Gastrocnemius medialis (tissue), 4 donors: ENCODE measurements at regions of chr2 and their contacts with region 1.

Region 1: GRCh38 chr2:164841719-164842623 is at the start of gene COBLL1:
- DNase-seq: peak; percentile 48 to 54
- ATAC-seq: peak; percentile 77 to 84
- H3K4me3 ChIP-seq: peak within 1 kb of the TSS; percentile 76 to 93 (median 84)
- H3K27ac ChIP-seq: peak within 1 kb of the TSS; percentile 76 to 92 (median 85)
- H3K4me1 ChIP-seq: peaks cover 8 to 12% of the 10 kb centered on the region in 2 donors
- H3K27me3 ChIP-seq: no peaks in the 10 kb centered on the region
- CTCF ChIP-seq: peak; percentile 51 to 86 (median 79)
- POLR2A ChIP-seq: no peak
- total RNA-seq, gene COBLL1: 1.9 to 9.6 (median 4.0) TPM

Region 2: GRCh38 chr2:164574925-164575324 is 267.0 kb before region 1 on chr2:
- in situ Hi-C with region 1: no loop called
- intact Hi-C with region 1: no loop called
- DNase-seq: no peak
- ATAC-seq: no peak
- H3K4me3 ChIP-seq: no peak overlapping the region
- H3K27ac ChIP-seq: no peak overlapping the region
- H3K4me1 ChIP-seq: no peaks in the 10 kb centered on the region
- H3K27me3 ChIP-seq: no peaks in the 10 kb centered on the region
- CTCF ChIP-seq: no peak
- POLR2A ChIP-seq: no peak

Region 3: DNA sequence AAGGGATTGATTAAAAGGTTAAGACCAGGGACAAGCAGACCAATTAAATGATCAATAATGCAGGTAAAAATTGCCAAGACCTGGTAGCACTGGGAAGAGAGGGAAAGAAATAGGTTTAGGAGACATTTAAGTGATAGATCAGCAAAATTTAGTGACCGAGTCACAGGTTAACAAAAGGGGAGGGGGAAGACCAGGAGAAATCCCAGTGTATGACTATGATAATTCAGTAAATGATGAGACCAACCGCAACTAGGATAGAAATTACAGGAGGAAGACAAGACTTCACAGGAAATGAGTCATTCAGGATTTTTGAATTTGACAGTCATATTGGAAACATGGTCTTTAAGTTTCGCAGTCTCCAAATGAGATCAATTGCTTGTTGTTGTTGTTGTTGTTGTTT is 63.2 kb before region 1 on chr2:
- in situ Hi-C with region 1: no loop called
- intact Hi-C with region 1: loop called (anchors 5 kb)
- DNase-seq: no peak
- ATAC-seq: no peak
- H3K4me3 ChIP-seq: no peak overlapping the region
- H3K27ac ChIP-seq: peak overlapping the region in 1 of 4 donors; percentile 1
- H3K4me1 ChIP-seq: no peaks in the 10 kb centered on the region
- H3K27me3 ChIP-seq: no peaks in the 10 kb centered on the region
- CTCF ChIP-seq: no peak
- POLR2A ChIP-seq: no peak

Region 4: GRCh38 chr2:165114346-165114939 is 272.5 kb after region 1 on chr2:
- in situ Hi-C with region 1: no loop called
- intact Hi-C with region 1: no loop called
- DNase-seq: no peak
- ATAC-seq: no peak
- H3K4me3 ChIP-seq: no peak overlapping the region
- H3K27ac ChIP-seq: no peak overlapping the region
- H3K4me1 ChIP-seq: no peaks in the 10 kb centered on the region
- H3K27me3 ChIP-seq: no peaks in the 10 kb centered on the region
- CTCF ChIP-seq: no peak
- POLR2A ChIP-seq: no peak